ENCODE measurements at regions of chr9 and their contacts with region 1.

Region 1: GRCh38 chr9:89549031-89549644 is 51.2 kb upstream of the SEMA4D start:
- DNase-seq: peak; percentile 80
- H3K4me3 Mint-ChIP-seq: no peak overlapping the region
- H3K27ac Mint-ChIP-seq: no peak overlapping the region
- H3K4me1 Mint-ChIP-seq: peaks cover 9% of the 10 kb centered on the region
- H3K27me3 Mint-ChIP-seq: no peaks in the 10 kb centered on the region
- CTCF ChIP-seq: peak; percentile 67

Region 2: GRCh38 chr9:89410641-89411350 is 138.3 kb before region 1 on chr9:
- CTCF ChIA-PET with region 1: interaction called, 4 read pairs
- intact Hi-C with region 1: loop called (anchors 1 kb)
- DNase-seq: no peak
- H3K4me3 Mint-ChIP-seq: no peak overlapping the region
- H3K27ac Mint-ChIP-seq: no peak overlapping the region
- H3K4me1 Mint-ChIP-seq: no peaks in the 10 kb centered on the region
- H3K27me3 Mint-ChIP-seq: no peaks in the 10 kb centered on the region
- CTCF ChIP-seq: no peak

Region 3: DNA sequence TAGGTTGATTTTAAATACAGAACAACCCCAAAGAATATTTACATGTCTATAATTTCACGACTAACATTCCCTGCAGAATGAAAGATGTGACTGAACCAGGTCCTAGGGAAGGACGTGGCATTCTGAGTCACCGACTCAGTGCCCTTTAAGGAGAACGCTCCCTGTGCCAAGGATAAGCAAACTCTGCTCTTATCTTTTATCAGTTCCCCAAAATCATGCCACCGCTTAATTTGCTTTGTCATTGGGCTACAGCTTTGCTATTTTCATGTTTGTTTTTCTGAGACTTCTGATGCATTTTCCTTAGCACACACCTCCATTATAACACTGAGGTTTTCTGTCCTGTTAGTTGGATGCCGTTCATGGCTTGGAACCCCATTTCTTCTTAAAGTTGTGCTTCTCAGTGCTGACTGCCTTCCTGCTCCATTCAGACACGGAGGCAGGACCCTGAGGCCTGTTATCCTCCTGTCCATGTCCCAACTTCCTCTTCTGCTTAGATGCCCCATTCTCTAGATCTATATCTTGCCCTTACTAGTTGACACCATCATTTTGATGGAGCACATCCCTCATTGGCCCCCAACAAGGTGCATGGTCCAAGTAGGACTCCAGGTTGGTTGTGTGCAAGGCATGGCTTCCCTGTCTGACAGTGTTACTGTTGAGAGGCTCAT is 40.1 kb before region 1 on chr9:
- CTCF ChIA-PET with region 1: no interaction called
- intact Hi-C with region 1: no loop called
- DNase-seq: no peak
- H3K4me3 Mint-ChIP-seq: no peak overlapping the region
- H3K27ac Mint-ChIP-seq: no peak overlapping the region
- H3K4me1 Mint-ChIP-seq: no peaks in the 10 kb centered on the region
- H3K27me3 Mint-ChIP-seq: peaks cover 21% of the 10 kb centered on the region
- CTCF ChIP-seq: no peak